Heart left ventricle (tissue), 16 donors: ENCODE measurements at regions of chr12 and their contacts with region 1.

Region 1: GRCh38 chr12:11553871-11554533 is 95.5 kb upstream of the ETV6 start:
- DNase-seq: peak in 1 of 5 donors; percentile 19
- ATAC-seq: peak in 2 of 4 donors; percentile 37 to 49
- H3K4me3 ChIP-seq: no peak overlapping the region
- H3K27ac ChIP-seq: no peak overlapping the region
- H3K4me1 ChIP-seq: peaks cover 0 to 9% (median 0%) of the 10 kb centered on the region in 12 donors
- H3K27me3 ChIP-seq: peaks cover 0 to 3% (median 0%) of the 10 kb centered on the region in 9 donors
- CTCF ChIP-seq: peak; percentile 25 to 67 (median 50)
- POLR2A ChIP-seq: no peak

Region 2: DNA sequence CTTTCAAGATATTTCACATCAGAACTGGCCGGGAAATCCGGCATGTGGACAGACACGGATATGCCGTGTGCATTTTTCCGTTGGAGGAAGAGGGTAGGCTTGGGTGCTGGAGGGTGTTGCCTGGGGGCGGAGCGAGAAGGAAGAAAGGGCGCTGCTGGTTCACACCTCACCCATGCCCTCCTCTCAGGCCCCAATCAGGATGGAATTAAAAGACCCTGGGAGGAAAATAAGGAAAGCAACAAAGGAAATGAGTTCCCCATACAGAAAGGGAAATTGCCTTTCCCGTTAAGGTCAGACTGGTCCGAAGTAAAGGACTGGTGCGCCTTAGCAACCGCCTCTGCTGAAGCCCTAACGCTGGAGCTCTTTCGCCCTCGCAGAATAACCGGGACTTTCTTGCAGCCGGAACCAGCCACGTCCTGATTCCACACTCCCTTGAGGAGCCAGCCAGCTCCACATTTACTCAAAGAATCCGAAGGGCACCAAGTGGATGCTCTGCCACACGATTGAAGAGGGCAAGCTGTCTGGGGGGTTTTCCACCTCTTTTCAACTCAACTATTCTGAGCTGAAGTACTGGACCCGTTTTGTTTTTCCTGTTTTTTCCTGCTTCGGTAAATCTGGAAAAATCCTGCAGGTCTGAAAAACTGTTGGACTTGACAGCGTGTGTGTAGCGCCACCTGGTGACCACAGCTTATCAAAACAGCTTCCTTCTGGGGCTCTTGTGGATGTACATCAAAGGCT is 479.0 kb after region 1 on chr12:
- intact Hi-C with region 1: loop called in 1 of 10 experiments (anchors 1 kb)
- DNase-seq: peak in 4 of 5 donors; percentile 71 to 82 (median 77)
- ATAC-seq: peak; percentile 83 to 92 (median 88)
- H3K4me3 ChIP-seq: peak overlapping the region in 11 of 12 donors; percentile 1 to 59 (median 50)
- H3K27ac ChIP-seq: peak overlapping the region in 11 of 12 donors; percentile 24 to 88 (median 63)
- H3K4me1 ChIP-seq: peaks cover 0 to 15% (median 5%) of the 10 kb centered on the region in 12 donors
- H3K27me3 ChIP-seq: no peaks in the 10 kb centered on the region
- CTCF ChIP-seq: peak; percentile 66 to 93 (median 86)
- POLR2A ChIP-seq: no peak